Left lung (tissue), 14 donors: ENCODE measurements at regions of chr1 and their contacts with region 1.

Region 1: GRCh38 chr1:203486618-203487370 is 7.2 kb upstream of the OPTC start:
- DNase-seq: no peak
- ATAC-seq: no peak
- H3K4me3 ChIP-seq: peak overlapping the region in 1 of 2 donors; percentile 36
- H3K27ac ChIP-seq: peak overlapping the region; percentile 31 to 71
- H3K4me1 ChIP-seq: peaks cover 0 to 13% of the 10 kb centered on the region in 2 donors
- H3K27me3 ChIP-seq: no peaks in the 10 kb centered on the region
- CTCF ChIP-seq: no peak

Region 2: GRCh38 chr1:203340112-203340804 is 146.5 kb before region 1 on chr1:
- intact Hi-C with region 1: loop called in 1 of 2 experiments (anchors 5 kb)
- DNase-seq: peak in 3 of 4 donors; percentile 68 to 91 (median 79)
- ATAC-seq: peak; percentile 88
- H3K4me3 ChIP-seq: no peak overlapping the region
- H3K27ac ChIP-seq: no peak overlapping the region
- H3K4me1 ChIP-seq: no peaks in the 10 kb centered on the region
- H3K27me3 ChIP-seq: peaks cover 0 to 22% of the 10 kb centered on the region in 2 donors
- CTCF ChIP-seq: peak; percentile 90 to 92

Region 3: DNA sequence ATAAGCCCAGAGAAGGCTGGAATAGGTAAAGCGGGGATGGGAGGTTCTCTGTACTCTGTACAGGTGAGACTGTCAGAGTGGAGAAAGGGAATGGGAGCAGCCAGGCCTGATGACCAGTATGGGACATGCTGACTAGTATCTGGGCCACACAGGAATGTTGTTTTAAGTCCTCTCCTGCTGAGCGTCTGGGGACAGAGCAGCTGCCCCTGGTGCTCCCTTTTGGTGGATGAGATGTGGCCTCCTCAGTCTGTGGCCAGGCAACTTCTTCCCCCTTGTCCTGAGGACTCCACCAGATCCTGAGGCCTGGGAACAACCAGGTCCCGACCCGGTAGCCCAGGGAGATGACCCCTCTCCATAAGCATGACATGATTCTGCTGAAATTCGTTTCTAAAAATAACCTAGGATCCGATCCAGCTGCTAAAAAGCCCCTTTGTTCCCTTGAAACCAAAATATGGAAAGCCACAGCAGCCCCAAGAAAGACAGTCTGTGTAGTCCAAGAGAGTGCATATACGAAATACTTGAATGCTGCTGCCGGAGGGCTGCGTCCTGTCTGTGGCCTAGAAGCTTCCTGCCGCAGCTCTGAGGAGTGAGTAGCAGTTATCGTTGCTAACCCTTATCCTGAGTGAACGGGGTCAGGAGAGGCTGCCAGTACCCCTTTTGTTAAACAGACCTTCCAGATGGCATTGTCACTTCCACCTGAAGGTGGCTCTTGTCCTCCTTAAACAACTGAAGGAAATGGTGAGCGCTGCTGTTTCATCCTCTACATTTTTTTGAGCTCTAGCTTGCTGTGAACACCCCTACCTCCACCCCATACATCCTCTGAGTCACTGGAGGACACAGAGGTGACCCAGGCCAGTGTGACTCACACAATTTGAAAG is 187.0 kb after region 1 on chr1:
- intact Hi-C with region 1: no loop called
- DNase-seq: peak in 2 of 4 donors; percentile 48 to 51
- ATAC-seq: peak; percentile 78
- H3K4me3 ChIP-seq: no peak overlapping the region
- H3K27ac ChIP-seq: peak overlapping the region; percentile 79 to 84
- H3K4me1 ChIP-seq: peaks cover 30 to 82% of the 10 kb centered on the region in 2 donors
- H3K27me3 ChIP-seq: no peaks in the 10 kb centered on the region
- CTCF ChIP-seq: peak in 1 of 2 donors; percentile 16